ENCODE measurements at regions of chr3 and their contacts with region 1.

Region 1: DNA sequence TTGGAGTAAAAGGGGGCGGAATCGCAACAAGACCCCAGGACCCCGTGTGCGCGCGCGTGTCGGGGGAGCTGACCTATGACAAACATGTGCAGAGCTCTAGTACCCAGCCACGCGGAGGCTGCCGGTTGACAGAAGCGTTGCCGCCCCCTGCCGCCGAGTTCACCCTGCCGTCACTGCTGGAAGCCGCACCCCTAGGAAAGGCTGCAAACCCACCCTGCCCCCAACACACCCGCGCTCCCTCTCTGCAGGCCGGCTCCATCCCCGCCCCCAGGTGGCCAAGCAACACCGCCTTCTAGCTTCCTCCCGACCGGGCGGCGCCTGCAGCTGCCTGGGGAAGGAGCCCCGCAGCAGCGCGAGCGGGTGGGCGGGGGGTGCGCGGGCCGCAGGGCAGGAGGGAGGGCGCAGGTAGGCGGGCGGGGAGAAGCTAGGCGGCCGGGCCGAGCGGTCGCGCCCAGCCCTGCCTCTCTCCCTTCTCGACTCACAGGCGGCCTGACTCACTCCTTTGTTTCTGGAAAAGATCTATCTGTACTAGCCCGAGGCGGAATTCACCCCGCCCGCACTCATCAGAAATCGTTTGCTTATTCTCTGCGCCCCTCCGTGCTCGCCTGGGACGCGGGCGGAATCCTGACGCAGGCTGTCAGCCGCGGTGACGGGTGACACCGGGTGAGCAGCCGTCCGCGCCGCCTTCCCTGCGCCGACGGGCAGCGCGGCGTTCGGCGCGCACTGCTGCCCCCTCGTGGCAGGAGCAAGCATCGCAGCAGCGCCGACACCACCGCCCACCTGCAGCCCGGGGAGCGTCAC is 160.8 kb downstream of the GAP43 start:
- DNase-seq: peak; percentile 86
- ATAC-seq: peak; percentile 87
- H3K4me3 Mint-ChIP-seq: peak overlapping the region; percentile 93
- H3K27ac Mint-ChIP-seq: peak overlapping the region; percentile 93
- H3K4me1 Mint-ChIP-seq: peaks cover 14% of the 10 kb centered on the region
- H3K27me3 Mint-ChIP-seq: peaks cover 8% of the 10 kb centered on the region
- CTCF ChIP-seq: peak; percentile 73

Region 2: GRCh38 chr3:114056130-114057010 is 1727.8 kb before region 1 on chr3 and contains the starts of genes CCDC191 and QTRT2:
- CTCF ChIA-PET with region 1: no interaction called
- POLR2A ChIA-PET with region 1: interaction called, 3 read pairs
- intact Hi-C with region 1: loop called (anchors 1 kb)
- DNase-seq: peak; percentile 89
- ATAC-seq: peak; percentile 95
- H3K4me3 Mint-ChIP-seq: peak within 1 kb of the TSS; percentile 99
- H3K27ac Mint-ChIP-seq: peak within 1 kb of the TSS; percentile 99
- H3K4me1 Mint-ChIP-seq: peaks cover 55% of the 10 kb centered on the region
- H3K27me3 Mint-ChIP-seq: peaks cover 3% of the 10 kb centered on the region
- CTCF ChIP-seq: no peak
- total RNA-seq, gene CCDC191: 14.7 and 17.2 TPM in 2 replicates
- total RNA-seq, gene QTRT2: 63.1 and 75.5 TPM in 2 replicates

Region 3: GRCh38 chr3:114827495-114827894 is 956.6 kb before region 1 on chr3:
- CTCF ChIA-PET with region 1: interaction called, 5 read pairs
- POLR2A ChIA-PET with region 1: interaction called, 3 read pairs
- intact Hi-C with region 1: loop called (anchors 1 kb)
- DNase-seq: no peak
- ATAC-seq: peak; percentile 75
- H3K4me3 Mint-ChIP-seq: no peak overlapping the region
- H3K27ac Mint-ChIP-seq: no peak overlapping the region
- H3K4me1 Mint-ChIP-seq: no peaks in the 10 kb centered on the region
- H3K27me3 Mint-ChIP-seq: no peaks in the 10 kb centered on the region
- CTCF ChIP-seq: no peak

Region 4: DNA sequence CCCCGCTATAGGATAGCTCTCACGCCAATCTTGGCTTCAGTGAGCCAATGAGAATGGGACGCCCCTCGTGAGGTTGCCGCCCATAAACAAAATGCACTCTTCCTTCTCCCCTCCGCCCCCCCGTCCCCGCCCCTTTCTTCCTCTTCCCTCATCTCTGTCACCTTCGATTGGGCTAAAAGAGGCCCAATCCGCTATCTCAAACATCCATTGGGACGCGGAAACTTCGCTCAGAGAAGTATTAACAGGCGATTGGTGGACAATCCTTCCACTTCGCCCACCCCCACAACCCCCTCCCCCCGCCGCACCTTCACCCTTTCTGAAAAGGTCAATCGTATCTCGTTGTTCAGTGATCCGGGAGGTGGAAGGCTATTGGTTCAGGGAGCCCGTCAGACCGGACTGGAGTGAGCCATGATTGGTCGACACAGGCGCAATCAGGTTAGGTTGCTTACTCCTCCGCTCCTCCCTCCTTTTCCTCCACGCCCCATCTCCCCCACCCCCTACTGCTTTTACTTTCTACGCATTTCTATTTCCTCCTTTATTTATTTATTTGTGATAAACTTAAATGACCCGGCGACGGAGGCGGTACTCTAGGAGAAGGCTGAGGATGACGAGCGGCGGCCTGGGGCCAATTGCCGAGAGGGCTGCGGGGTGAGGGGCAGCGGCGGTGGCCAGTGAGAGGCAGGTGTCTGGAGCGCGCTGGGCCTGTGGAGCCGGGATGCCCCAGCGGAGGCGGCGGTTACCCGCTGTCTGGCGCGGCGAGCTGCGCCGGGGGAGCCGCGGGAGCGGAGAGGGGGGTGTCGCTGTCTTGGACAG is 636.6 kb before region 1 on chr3:
- CTCF ChIA-PET with region 1: interaction called, 3 read pairs
- POLR2A ChIA-PET with region 1: interaction called, 13 read pairs
- intact Hi-C with region 1: loop called (anchors 1 kb)
- DNase-seq: peak; percentile 81
- ATAC-seq: peak; percentile 77
- H3K4me3 Mint-ChIP-seq: peak overlapping the region; percentile 94
- H3K27ac Mint-ChIP-seq: peak overlapping the region; percentile 98
- H3K4me1 Mint-ChIP-seq: peaks cover 34% of the 10 kb centered on the region
- H3K27me3 Mint-ChIP-seq: no peaks in the 10 kb centered on the region
- CTCF ChIP-seq: no peak

Region 5: GRCh38 chr3:115512565-115513415 is 271.3 kb before region 1 on chr3:
- CTCF ChIA-PET with region 1: no interaction called
- POLR2A ChIA-PET with region 1: no interaction called
- intact Hi-C with region 1: loop called (anchors 2 kb)
- DNase-seq: no peak
- ATAC-seq: peak; percentile 47
- H3K4me3 Mint-ChIP-seq: peak overlapping the region; percentile 88
- H3K27ac Mint-ChIP-seq: peak overlapping the region; percentile 16
- H3K4me1 Mint-ChIP-seq: peaks cover 27% of the 10 kb centered on the region
- H3K27me3 Mint-ChIP-seq: peaks cover 10% of the 10 kb centered on the region
- CTCF ChIP-seq: no peak

Region 6: DNA sequence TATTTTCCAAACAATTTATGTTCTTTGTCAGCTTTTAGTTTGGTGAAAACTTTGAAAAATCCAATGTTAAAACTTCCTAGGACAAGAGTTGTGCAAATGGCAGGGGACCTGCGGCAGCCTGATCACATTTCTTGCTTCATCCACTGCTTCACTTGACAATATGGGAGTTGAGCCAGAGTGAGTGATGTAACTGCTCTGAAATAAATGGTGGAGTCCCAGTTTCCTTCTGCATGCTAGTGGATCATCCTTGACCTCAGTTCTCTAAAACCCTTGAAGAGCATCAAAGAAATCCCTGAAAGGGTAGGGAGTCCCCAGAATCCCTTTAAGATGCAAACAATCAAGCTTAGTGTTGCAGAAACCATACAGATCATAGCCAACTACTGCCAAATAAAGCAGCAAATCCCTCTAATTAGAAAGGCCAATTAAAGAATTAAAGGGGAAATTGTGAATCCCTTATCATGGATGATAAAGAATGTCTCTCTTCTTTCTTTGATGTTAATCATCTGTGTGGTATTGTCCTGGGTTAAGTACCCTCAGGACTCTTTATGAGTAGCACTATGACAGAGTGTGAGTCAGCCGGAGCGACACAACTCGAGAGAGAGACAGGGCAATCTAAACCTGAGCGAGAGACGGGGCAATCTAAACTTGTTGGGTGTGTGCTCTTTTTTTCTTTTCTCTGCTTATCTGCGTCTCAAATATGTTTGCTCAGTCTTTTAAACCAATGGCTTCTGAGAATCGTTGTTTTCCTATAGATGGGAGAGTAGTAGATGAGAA is 202.6 kb before region 1 on chr3:
- CTCF ChIA-PET with region 1: no interaction called
- POLR2A ChIA-PET with region 1: no interaction called
- intact Hi-C with region 1: no loop called
- DNase-seq: no peak
- ATAC-seq: no peak
- H3K4me3 Mint-ChIP-seq: no peak overlapping the region
- H3K27ac Mint-ChIP-seq: no peak overlapping the region
- H3K4me1 Mint-ChIP-seq: no peaks in the 10 kb centered on the region
- H3K27me3 Mint-ChIP-seq: peaks cover 3% of the 10 kb centered on the region
- CTCF ChIP-seq: no peak

Region 7: GRCh38 chr3:115680803-115681345 is 103.3 kb before region 1 on chr3:
- CTCF ChIA-PET with region 1: no interaction called
- POLR2A ChIA-PET with region 1: no interaction called
- intact Hi-C with region 1: no loop called
- DNase-seq: no peak
- ATAC-seq: no peak
- H3K4me3 Mint-ChIP-seq: no peak overlapping the region
- H3K27ac Mint-ChIP-seq: no peak overlapping the region
- H3K4me1 Mint-ChIP-seq: no peaks in the 10 kb centered on the region
- H3K27me3 Mint-ChIP-seq: peaks cover 8% of the 10 kb centered on the region
- CTCF ChIP-seq: no peak

Region 8: DNA sequence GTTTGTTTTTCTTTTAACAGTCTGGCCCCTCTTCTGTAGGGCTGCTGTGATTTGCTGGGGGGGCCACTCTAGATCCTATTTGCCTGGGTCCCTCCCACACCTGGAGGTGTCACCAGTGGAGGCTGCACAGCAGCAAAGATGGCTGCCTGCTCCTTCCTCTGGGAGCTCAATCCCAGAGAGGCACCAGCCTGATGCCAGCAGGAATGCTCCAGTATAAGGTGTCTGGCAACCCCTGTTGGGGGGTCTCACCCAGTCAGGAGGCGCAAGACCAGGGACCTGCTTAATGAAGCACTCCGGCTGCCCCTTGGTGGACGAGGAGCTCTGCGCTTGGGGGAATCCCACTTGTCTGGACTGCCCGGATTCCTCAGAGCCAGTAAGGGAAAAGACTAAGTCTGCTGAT is 42.5 kb before region 1 on chr3:
- CTCF ChIA-PET with region 1: no interaction called
- POLR2A ChIA-PET with region 1: no interaction called
- intact Hi-C with region 1: no loop called
- DNase-seq: no peak
- ATAC-seq: no peak
- H3K4me3 Mint-ChIP-seq: no peak overlapping the region
- H3K27ac Mint-ChIP-seq: no peak overlapping the region
- H3K4me1 Mint-ChIP-seq: no peaks in the 10 kb centered on the region
- H3K27me3 Mint-ChIP-seq: peaks cover 34% of the 10 kb centered on the region
- CTCF ChIP-seq: no peak

Region 9: GRCh38 chr3:115814778-115815380 is 30.7 kb after region 1 on chr3:
- CTCF ChIA-PET with region 1: interaction called, 5 read pairs
- POLR2A ChIA-PET with region 1: no interaction called
- intact Hi-C with region 1: loop called (anchors 1 kb)
- DNase-seq: peak; percentile 44
- ATAC-seq: peak; percentile 70
- H3K4me3 Mint-ChIP-seq: no peak overlapping the region
- H3K27ac Mint-ChIP-seq: no peak overlapping the region
- H3K4me1 Mint-ChIP-seq: no peaks in the 10 kb centered on the region
- H3K27me3 Mint-ChIP-seq: peaks cover 5% of the 10 kb centered on the region
- CTCF ChIP-seq: no peak

Region 10: GRCh38 chr3:116129230-116129946 is 345.2 kb after region 1 on chr3:
- CTCF ChIA-PET with region 1: no interaction called
- POLR2A ChIA-PET with region 1: no interaction called
- intact Hi-C with region 1: no loop called
- DNase-seq: no peak
- ATAC-seq: no peak
- H3K4me3 Mint-ChIP-seq: no peak overlapping the region
- H3K27ac Mint-ChIP-seq: no peak overlapping the region
- H3K4me1 Mint-ChIP-seq: no peaks in the 10 kb centered on the region
- H3K27me3 Mint-ChIP-seq: no peaks in the 10 kb centered on the region
- CTCF ChIP-seq: no peak